ENCODE measurements at regions of chr1 and their contacts with region 1.

Region 1: GRCh38 chr1:207321079-207321789 is at the start of gene CD55:
- DNase-seq: peak; percentile 94 to 100 (median 100)
- ATAC-seq: peak; percentile 87
- H3K4me3 Mint-ChIP-seq: peak within 1 kb of the TSS; percentile 82 to 99 (median 96)
- H3K27ac Mint-ChIP-seq: peak within 1 kb of the TSS; percentile 98 to 100 (median 100)
- H3K4me1 Mint-ChIP-seq: peaks cover 27 to 70% (median 51%) of the 10 kb centered on the region in 4 donors
- H3K27me3 Mint-ChIP-seq: peaks cover 0 to 4% (median 0%) of the 10 kb centered on the region in 5 donors
- polyA plus RNA-seq, gene CD55: 156 to 193 (median 156) TPM

Region 2: GRCh38 chr1:207052911-207053769 is 268.1 kb before region 1 on chr1 and contains the start of gene PFKFB2:
- POLR2A ChIA-PET with region 1: interaction called, 10 read pairs
- DNase-seq: peak; percentile 90 to 97 (median 94)
- ATAC-seq: peak; percentile 88 to 90
- H3K4me3 Mint-ChIP-seq: peak within 1 kb of the TSS; percentile 91 to 100 (median 98)
- H3K27ac Mint-ChIP-seq: peak within 1 kb of the TSS; percentile 86 to 100 (median 98)
- H3K4me1 Mint-ChIP-seq: peaks cover 20 to 58% (median 51%) of the 10 kb centered on the region in 4 donors
- H3K27me3 Mint-ChIP-seq: no peaks in the 10 kb centered on the region
- polyA plus RNA-seq, gene PFKFB2: 1.0 to 1.3 (median 1.1) TPM

Region 3: GRCh38 chr1:207282493-207283380 is 38.5 kb before region 1 on chr1:
- POLR2A ChIA-PET with region 1: interaction called, 14 read pairs
- DNase-seq: peak in 2 of 10 donors; percentile 26 to 34
- ATAC-seq: peak; percentile 42 to 68
- H3K4me3 Mint-ChIP-seq: peak overlapping the region in 9 of 10 donors; percentile 2 to 70 (median 47)
- H3K27ac Mint-ChIP-seq: peak overlapping the region in 9 of 10 donors; percentile 7 to 90 (median 74)
- H3K4me1 Mint-ChIP-seq: peaks cover 23 to 70% (median 53%) of the 10 kb centered on the region in 4 donors
- H3K27me3 Mint-ChIP-seq: no peaks in the 10 kb centered on the region

Region 4: DNA sequence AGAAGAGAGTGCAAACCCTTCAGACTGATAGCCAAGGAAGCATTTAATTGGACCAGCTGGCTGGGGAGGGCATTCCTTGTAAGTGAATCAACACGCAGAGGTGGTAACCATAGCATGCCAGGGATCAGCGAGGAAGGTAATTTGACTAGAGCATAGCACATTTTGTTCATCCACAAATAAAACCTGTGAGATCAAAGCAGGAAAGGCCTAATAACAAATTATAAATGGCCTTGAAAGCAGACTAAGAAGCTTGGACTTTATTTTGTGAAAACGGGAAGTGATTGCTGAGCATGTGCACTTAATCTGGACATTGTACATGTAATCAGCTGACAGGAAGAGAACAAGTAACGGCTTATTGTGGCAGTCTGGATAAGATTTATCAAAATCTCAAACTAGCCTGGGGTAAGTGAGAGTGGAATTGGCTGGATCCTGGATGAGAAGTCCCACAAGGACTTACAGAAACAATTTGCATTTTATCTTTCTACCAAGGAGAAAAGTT is 11.4 kb before region 1 on chr1:
- POLR2A ChIA-PET with region 1: interaction called, 39 read pairs
- DNase-seq: no peak
- ATAC-seq: peak; percentile 22 to 53
- H3K4me3 Mint-ChIP-seq: peak overlapping the region in 9 of 10 donors; percentile 8 to 76 (median 61)
- H3K27ac Mint-ChIP-seq: peak overlapping the region in 9 of 10 donors; percentile 26 to 92 (median 85)
- H3K4me1 Mint-ChIP-seq: peaks cover 7 to 25% (median 19%) of the 10 kb centered on the region in 4 donors
- H3K27me3 Mint-ChIP-seq: no peaks in the 10 kb centered on the region

Region 5: DNA sequence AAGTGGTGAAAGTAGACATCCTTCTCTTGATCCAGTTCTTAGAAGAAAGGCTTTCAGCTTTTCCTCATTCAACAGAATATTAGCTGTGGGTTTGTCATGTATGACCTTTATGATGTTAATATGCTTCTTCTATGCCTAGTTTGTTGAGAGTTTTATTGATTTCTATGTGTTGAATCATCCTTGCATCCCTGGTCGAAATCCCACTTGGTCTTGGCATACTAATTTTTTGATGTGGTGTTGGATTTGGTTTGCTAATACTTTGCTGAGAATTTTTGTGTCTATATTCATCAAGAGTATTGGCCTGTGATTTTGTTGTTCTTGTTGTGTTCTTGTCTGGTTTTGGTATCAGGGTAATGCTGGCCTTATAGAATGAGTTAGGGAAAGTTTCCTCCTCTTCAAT is 21.1 kb after region 1 on chr1:
- POLR2A ChIA-PET with region 1: interaction called, 11 read pairs
- DNase-seq: no peak
- ATAC-seq: no peak
- H3K4me3 Mint-ChIP-seq: peak overlapping the region in 9 of 10 donors; percentile 55 to 84 (median 72)
- H3K27ac Mint-ChIP-seq: peak overlapping the region; percentile 45 to 87 (median 79)
- H3K4me1 Mint-ChIP-seq: peaks cover 55 to 92% (median 85%) of the 10 kb centered on the region in 4 donors
- H3K27me3 Mint-ChIP-seq: no peaks in the 10 kb centered on the region

Region 6: GRCh38 chr1:207404849-207405525 is 83.8 kb after region 1 on chr1:
- POLR2A ChIA-PET with region 1: interaction called, 16 read pairs
- DNase-seq: peak in 4 of 10 donors; percentile 5 to 66 (median 60)
- ATAC-seq: peak; percentile 84 to 92
- H3K4me3 Mint-ChIP-seq: no peak overlapping the region
- H3K27ac Mint-ChIP-seq: no peak overlapping the region
- H3K4me1 Mint-ChIP-seq: peaks cover 0 to 17% (median 2%) of the 10 kb centered on the region in 4 donors
- H3K27me3 Mint-ChIP-seq: peaks cover 0 to 4% (median 0%) of the 10 kb centered on the region in 5 donors

Measured in naive thymus-derived CD8-positive, alpha-beta T cell (primary cell).